Dorsolateral prefrontal cortex (tissue), 120 donors: ENCODE measurements at regions of chr1 and their contacts with region 1.

Region 1: GRCh38 chr1:160951443-160952128 is 3.0 kb downstream of the ITLN2 start:
- DNase-seq: peak in 8 of 10 donors; percentile 6 to 67 (median 54)
- H3K4me3 ChIP-seq: no peak overlapping the region
- H3K27ac ChIP-seq: no peak overlapping the region
- H3K27me3 ChIP-seq: peaks cover 0 to 4% (median 0%) of the 10 kb centered on the region in 45 donors
- CTCF ChIP-seq: peak in 55 of 56 donors; percentile 35 to 75 (median 61)

Region 2: DNA sequence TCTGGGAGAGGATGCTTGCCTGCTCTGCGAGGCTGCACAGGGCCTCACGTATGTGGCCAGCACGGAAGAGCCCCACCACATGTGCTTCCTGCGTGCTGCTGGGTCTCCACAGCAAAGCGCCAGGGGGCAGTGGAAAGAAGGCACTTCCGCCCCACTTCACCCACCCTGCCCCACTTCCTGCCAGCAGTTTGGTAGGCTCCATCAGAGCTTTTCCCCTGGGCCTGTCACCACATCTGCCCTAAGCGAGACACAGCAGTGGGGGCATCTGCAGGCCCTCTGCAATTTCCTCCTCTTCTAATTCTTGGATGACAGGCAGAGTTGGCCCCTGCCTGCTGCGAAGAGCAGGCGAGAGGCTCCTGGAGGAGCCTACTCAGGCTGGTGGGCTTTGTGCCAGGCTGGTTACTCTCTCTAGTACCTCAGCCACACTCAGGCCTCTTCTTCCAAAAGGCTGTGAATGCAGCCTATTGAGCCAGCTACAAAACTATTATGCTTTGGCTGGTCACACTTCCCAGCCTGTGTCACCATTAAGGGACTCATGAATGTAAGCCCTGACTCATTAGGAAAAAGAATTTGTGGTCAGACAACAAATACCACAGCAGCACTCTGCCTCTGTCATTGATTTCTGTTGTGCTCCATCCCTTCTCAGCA is 113.9 kb before region 1 on chr1:
- intact Hi-C with region 1: loop called in 1 of 2 experiments (anchors 5 kb)
- DNase-seq: no peak
- H3K4me3 ChIP-seq: no peak overlapping the region
- H3K27ac ChIP-seq: peak overlapping the region in 1 of 59 donors; percentile 3
- H3K27me3 ChIP-seq: peaks cover 0 to 7% (median 0%) of the 10 kb centered on the region in 45 donors
- CTCF ChIP-seq: no peak

Region 3: GRCh38 chr1:160884579-160884978 is 67.0 kb before region 1 on chr1:
- intact Hi-C with region 1: no loop called
- DNase-seq: no peak
- H3K4me3 ChIP-seq: no peak overlapping the region
- H3K27ac ChIP-seq: no peak overlapping the region
- H3K27me3 ChIP-seq: peaks cover 0 to 3% (median 0%) of the 10 kb centered on the region in 45 donors
- CTCF ChIP-seq: no peak